ENCODE measurements at regions of chr22 and their contacts with region 1.

Region 1: GRCh38 chr22:24156913-24157821 is 24.1 kb upstream of the SUSD2 start:
- DNase-seq: peak; percentile 84
- ATAC-seq: peak; percentile 84
- H3K4me3 Mint-ChIP-seq: peak overlapping the region; percentile 91
- H3K27ac Mint-ChIP-seq: peak overlapping the region; percentile 85
- H3K4me1 Mint-ChIP-seq: peaks cover 64% of the 10 kb centered on the region
- H3K27me3 Mint-ChIP-seq: no peaks in the 10 kb centered on the region
- CTCF ChIP-seq: no peak

Region 2: GRCh38 chr22:24011735-24012068 is 145.5 kb before region 1 on chr22:
- CTCF ChIA-PET with region 1: interaction called, 3 read pairs
- POLR2A ChIA-PET with region 1: interaction called, 25 read pairs
- intact Hi-C with region 1: loop called (anchors 2 kb)
- DNase-seq: no peak
- ATAC-seq: no peak
- H3K4me3 Mint-ChIP-seq: peak overlapping the region; percentile 98
- H3K27ac Mint-ChIP-seq: peak overlapping the region; percentile 88
- H3K4me1 Mint-ChIP-seq: peaks cover 23% of the 10 kb centered on the region
- H3K27me3 Mint-ChIP-seq: no peaks in the 10 kb centered on the region
- CTCF ChIP-seq: no peak

Region 3: DNA sequence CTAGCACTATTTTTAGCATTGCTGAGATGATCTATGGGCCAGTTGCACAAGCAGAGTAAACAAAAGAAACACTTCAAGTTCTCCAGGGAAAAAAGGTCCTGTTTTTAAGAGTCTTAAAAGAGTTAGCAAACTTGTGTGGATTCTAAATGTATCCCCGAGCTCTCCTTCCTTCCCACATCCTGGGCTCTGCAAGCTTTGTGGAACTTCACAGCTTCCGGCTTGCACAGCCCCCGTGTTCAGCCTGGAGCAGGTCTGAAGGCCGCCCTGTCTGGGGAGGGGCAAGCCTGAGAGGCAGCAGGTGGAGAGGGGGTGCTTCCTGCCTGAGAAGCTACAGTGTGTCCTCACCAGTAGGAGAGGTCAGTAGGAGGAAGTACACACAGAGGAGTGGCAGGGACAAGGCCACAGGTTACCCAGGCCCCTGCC is 11.0 kb before region 1 on chr22:
- CTCF ChIA-PET with region 1: interaction called, 7 read pairs
- POLR2A ChIA-PET with region 1: interaction called, 13 read pairs
- intact Hi-C with region 1: loop called (anchors 1 kb)
- DNase-seq: no peak
- ATAC-seq: peak; percentile 84
- H3K4me3 Mint-ChIP-seq: no peak overlapping the region
- H3K27ac Mint-ChIP-seq: peak overlapping the region; percentile 19
- H3K4me1 Mint-ChIP-seq: peaks cover 44% of the 10 kb centered on the region
- H3K27me3 Mint-ChIP-seq: no peaks in the 10 kb centered on the region
- CTCF ChIP-seq: no peak

Region 4: GRCh38 chr22:24244101-24244787 is 87.1 kb after region 1 on chr22:
- CTCF ChIA-PET with region 1: interaction called, 10 read pairs
- POLR2A ChIA-PET with region 1: interaction called, 4 read pairs
- intact Hi-C with region 1: no loop called
- DNase-seq: no peak
- ATAC-seq: no peak
- H3K4me3 Mint-ChIP-seq: no peak overlapping the region
- H3K27ac Mint-ChIP-seq: no peak overlapping the region
- H3K4me1 Mint-ChIP-seq: peaks cover 21% of the 10 kb centered on the region
- H3K27me3 Mint-ChIP-seq: no peaks in the 10 kb centered on the region
- CTCF ChIP-seq: no peak

Region 5: DNA sequence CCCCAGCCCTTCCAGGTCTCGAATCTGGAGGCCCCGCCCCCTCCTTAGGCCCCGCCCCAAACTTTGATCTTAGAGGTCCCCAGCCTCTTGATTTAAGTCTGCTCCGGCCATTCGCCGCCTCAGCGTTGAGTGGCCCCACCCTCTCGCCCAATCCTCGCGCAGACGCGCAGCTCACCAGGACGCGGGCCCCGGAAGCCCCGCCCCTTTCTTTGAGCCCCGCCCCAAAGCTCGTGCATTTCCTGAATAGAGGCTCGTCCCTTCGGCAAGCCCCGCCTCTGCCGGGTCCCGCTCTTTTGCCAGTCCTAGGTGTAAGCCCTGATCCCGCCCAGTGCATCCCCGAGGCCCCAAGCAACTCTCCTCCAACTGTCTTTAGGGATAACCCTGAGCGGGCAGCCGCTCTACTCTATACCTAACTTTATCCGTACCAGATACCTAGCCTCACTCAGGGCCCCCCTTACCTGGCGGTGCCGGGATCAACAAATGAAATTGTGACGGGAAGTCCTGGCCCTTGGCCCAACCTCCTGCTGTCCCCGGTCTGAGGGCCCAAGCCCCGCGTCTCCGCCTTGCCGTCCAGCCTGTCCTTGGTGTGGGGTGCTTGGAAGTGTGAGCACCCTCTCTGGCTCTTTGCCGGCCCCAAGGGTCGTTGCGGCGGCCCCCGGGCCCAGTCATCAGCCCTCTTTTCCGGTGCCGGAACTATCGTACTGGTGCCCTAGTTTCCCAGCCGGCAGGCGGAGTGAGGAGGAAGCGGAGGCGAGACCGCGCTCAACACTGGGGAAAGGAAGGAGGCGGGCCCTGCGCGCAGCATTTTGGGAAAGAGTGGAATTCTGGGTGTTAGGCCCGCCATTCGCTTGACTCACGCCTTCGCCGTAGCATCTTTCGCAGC is 398.2 kb after region 1 on chr22 and contains the start of gene SNRPD3:
- CTCF ChIA-PET with region 1: no interaction called
- POLR2A ChIA-PET with region 1: no interaction called
- intact Hi-C with region 1: loop called (anchors 1 kb)
- DNase-seq: peak; percentile 94
- ATAC-seq: peak; percentile 83
- H3K4me3 Mint-ChIP-seq: peak within 1 kb of the TSS; percentile 99
- H3K27ac Mint-ChIP-seq: peak within 1 kb of the TSS; percentile 96
- H3K4me1 Mint-ChIP-seq: peaks cover 85% of the 10 kb centered on the region
- H3K27me3 Mint-ChIP-seq: no peaks in the 10 kb centered on the region
- CTCF ChIP-seq: no peak
- total RNA-seq, gene SNRPD3: 96.5 and 98.6 TPM in 2 replicates